CD14-positive monocyte (primary cell): ENCODE measurements at regions of chr13 and their contacts with region 1.

Region 1: GRCh38 chr13:40528881-40529280 is 137.6 kb downstream of the FOXO1 start:
- DNase-seq: no peak
- H3K4me3 ChIP-seq: no peak overlapping the region
- H3K4me3 Mint-ChIP-seq: no peak overlapping the region
- H3K27ac ChIP-seq: no peak overlapping the region
- H3K27ac Mint-ChIP-seq: no peak overlapping the region
- H3K4me1 ChIP-seq: no peaks in the 10 kb centered on the region
- H3K4me1 Mint-ChIP-seq: no peaks in the 10 kb centered on the region
- H3K27me3 ChIP-seq: no peaks in the 10 kb centered on the region
- H3K27me3 Mint-ChIP-seq: peaks cover 0 to 1% (median 0%) of the 10 kb centered on the region in 3 donors
- CTCF ChIP-seq: no peak

Region 2: DNA sequence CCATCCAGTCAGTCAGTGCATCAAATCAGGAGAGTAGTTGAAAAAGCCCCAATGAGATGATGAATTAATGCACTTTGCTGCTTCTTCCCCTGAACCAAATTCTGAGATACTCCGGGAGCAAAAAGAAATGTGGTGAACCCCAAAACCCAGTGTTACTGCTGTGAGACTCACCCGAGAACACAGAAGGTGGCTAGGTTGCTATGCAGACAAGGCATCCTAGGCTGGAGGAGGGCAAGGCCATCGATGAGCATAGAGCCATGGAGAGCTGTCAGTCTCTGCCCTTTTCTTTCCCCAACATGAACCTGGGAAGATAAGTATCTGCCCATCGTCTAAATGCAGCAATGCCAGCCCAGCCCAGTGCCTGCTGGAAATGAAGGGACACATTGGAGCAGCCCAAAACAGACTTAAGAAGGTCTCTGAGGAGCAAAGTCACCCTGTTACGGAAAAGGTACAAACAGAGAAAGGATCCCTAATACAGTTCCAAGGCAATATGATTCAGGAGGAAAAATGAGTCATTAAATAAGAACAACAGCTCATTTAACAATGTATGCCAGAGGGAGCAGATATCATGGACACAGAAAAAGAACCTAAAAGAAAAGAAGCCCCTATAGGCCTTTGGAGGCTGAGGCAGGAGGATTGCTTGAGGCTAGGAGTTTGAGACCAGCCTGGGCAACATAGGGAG is 134.4 kb before region 1 on chr13:
- intact Hi-C with region 1: no loop called
- DNase-seq: no peak
- H3K4me3 ChIP-seq: no peak overlapping the region
- H3K4me3 Mint-ChIP-seq: no peak overlapping the region
- H3K27ac ChIP-seq: no peak overlapping the region
- H3K27ac Mint-ChIP-seq: no peak overlapping the region
- H3K4me1 ChIP-seq: peaks cover 14 to 20% of the 10 kb centered on the region in 2 donors
- H3K4me1 Mint-ChIP-seq: peaks cover 24% of the 10 kb centered on the region
- H3K27me3 ChIP-seq: no peaks in the 10 kb centered on the region
- H3K27me3 Mint-ChIP-seq: peaks cover 0 to 3% (median 2%) of the 10 kb centered on the region in 3 donors
- CTCF ChIP-seq: no peak

Region 3: GRCh38 chr13:40578055-40578454 is 49.2 kb after region 1 on chr13:
- intact Hi-C with region 1: loop called in 1 of 2 experiments (anchors 5 kb)
- DNase-seq: no peak
- H3K4me3 ChIP-seq: no peak overlapping the region
- H3K4me3 Mint-ChIP-seq: no peak overlapping the region
- H3K27ac ChIP-seq: no peak overlapping the region
- H3K27ac Mint-ChIP-seq: no peak overlapping the region
- H3K4me1 ChIP-seq: peaks cover 3 to 6% of the 10 kb centered on the region in 2 donors
- H3K4me1 Mint-ChIP-seq: peaks cover 30% of the 10 kb centered on the region
- H3K27me3 ChIP-seq: no peaks in the 10 kb centered on the region
- H3K27me3 Mint-ChIP-seq: no peaks in the 10 kb centered on the region
- CTCF ChIP-seq: no peak